ENCODE measurements at regions of chr6 and their contacts with region 1.

Region 1: DNA sequence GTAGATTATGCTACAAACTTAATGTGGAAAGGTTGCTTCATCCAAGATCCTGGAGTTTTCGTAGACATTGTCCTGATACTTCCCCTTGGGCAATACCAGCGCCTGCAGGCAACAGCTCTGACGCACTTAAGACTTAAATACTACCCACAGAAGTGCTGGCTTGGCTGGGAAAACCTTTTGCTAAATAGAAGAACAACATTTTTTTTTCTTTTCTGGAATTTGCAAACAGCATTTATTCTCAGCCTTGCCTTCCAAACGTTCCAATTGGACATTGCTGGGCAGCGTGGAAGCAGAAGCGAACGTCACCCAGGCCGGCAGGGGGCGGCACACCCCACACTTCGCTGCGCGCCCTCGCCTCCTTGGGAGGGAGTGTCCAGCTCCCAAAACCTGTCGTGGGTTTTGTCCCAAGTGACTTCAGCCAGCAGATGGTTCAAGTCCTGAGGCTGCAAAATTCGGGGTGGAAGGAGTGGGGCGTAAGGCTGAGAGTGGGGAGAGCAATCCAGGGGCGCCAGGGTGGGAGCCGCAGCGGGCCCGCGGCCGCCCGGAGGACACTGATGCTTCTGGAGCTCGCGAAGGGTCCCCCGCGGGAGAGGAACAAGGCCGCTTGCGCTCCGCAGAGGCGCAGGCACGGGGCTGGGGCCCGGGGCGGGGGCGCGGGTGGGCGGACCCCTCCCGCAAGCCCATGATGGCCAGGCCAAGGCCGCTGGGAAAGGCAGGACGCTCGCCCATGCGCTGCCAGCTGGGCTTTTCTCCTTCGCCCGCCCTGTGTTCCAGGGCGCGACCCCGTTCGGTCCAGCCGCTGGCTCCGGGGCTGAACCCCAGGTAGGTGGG is 60.8 kb upstream of the MAP3K4 start:
- DNase-seq: peak; percentile 76
- H3K4me3 ChIP-seq: peak overlapping the region; percentile 73
- H3K27ac ChIP-seq: no peak overlapping the region
- H3K4me1 ChIP-seq: peaks cover 11% of the 10 kb centered on the region
- H3K27me3 ChIP-seq: peaks cover 19% of the 10 kb centered on the region
- CTCF ChIP-seq: peak; percentile 91

Region 2: DNA sequence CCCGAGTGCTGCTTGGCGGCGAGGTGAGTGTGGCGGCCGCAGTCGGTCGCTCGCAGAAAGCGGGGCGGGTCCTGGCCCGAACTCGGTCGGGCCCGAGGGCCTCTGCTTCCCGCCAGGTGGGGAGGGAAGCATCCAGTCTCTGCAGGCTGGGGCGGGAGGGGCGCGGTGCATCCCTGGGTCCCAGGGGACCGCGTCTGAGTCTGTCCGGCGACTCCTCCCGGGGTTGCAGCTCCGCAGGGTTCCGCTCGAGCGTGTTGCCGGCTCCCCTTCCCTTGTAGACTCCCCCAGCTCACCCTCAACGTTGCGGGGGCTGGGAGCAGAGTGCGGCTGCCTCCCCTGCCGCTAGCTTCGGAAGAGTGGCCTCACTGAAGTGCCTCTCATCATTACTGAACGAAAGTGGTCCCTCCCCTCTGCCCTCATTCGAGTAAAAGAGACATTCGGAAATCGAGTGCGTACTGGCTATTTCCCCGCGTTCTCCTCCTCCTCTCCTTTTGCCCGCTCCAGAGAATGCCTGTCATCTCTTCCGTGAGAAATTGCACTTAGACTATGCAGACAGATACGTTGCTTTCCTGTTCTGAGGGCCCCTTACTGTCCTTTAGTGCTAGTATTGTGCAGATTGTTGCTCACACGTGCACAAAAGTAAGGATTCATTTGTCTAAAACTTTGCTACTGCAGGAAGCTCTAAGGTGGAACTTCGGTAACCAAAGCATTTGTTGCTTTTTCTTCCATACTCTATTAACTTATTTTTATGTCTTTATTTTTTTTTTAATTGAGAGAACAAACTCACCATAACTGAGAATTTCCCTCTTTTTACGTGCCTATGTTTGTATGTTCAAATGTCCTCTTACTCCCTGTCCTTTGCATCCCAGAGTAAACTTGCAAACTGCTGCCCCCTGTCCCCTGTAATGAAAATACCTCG is 61.6 kb after region 1 on chr6:
- intact Hi-C with region 1: loop called (anchors 10 kb)
- DNase-seq: peak; percentile 57
- H3K4me3 ChIP-seq: peak overlapping the region; percentile 97
- H3K27ac ChIP-seq: peak overlapping the region; percentile 98
- H3K4me1 ChIP-seq: peaks cover 67% of the 10 kb centered on the region
- H3K27me3 ChIP-seq: no peaks in the 10 kb centered on the region
- CTCF ChIP-seq: peak; percentile 72

Region 3: GRCh38 chr6:161370880-161371279 is 440.1 kb after region 1 on chr6:
- intact Hi-C with region 1: loop called (anchors 5 kb)
- DNase-seq: no peak
- H3K4me3 ChIP-seq: no peak overlapping the region
- H3K27ac ChIP-seq: no peak overlapping the region
- H3K4me1 ChIP-seq: peaks cover 5% of the 10 kb centered on the region
- H3K27me3 ChIP-seq: no peaks in the 10 kb centered on the region
- CTCF ChIP-seq: peak; percentile 88